IMR-90 (cell line): ENCODE measurements at regions of chr18 and their contacts with region 1.

Region 1: GRCh38 chr18:12376718-12377555 is at the start of gene AFG3L2:
- DNase-seq: peak; percentile 98
- ATAC-seq: peak; percentile 91
- H3K4me3 ChIP-seq: peak within 1 kb of the TSS; percentile 73
- H3K27ac ChIP-seq: peak within 1 kb of the TSS; percentile 76
- H3K4me1 ChIP-seq: peaks cover 2% of the 10 kb centered on the region
- H3K27me3 ChIP-seq: no peaks in the 10 kb centered on the region
- CTCF ChIP-seq: no peak
- POLR2A ChIP-seq: peak; percentile 94
- RAD21 ChIP-seq: 0 out of 2 replicates have a peak, but pooled peaks have one; percentile 3
- total RNA-seq, gene AFG3L2: 37.6 and 65.5 TPM in 2 replicates

Region 2: DNA sequence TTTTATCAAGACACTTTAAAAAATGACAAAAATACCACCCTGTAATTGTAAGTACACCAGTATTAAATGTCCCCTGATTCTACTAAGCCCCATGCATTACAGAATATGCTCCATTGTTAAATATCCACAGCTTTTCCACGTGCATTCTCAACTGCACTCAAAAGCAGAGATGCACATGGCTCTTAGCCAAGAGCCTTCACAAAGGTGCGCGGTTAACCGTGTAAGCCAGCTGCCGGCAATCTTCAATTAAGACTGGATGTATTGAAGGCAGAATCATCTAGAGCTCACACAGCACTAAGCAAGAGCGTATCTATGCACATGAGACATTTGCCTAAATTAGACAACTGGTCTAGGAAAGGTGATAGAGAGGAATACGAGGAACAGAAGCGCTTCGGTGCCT is 1572.8 kb before region 1 on chr18:
- CTCF ChIA-PET with region 1: no interaction called
- POLR2A ChIA-PET with region 1: no interaction called
- dilution Hi-C with region 1: no loop called
- in situ Hi-C with region 1: no loop called
- intact Hi-C with region 1: no loop called
- DNase-seq: no peak
- ATAC-seq: no peak
- H3K4me3 ChIP-seq: no peak overlapping the region
- H3K27ac ChIP-seq: no peak overlapping the region
- H3K4me1 ChIP-seq: peaks cover 1% of the 10 kb centered on the region; the same call in 1 of the 2 replicates
- H3K27me3 ChIP-seq: no peaks in the 10 kb centered on the region
- CTCF ChIP-seq: no peak
- POLR2A ChIP-seq: no peak
- RAD21 ChIP-seq: no peak

Region 3: DNA sequence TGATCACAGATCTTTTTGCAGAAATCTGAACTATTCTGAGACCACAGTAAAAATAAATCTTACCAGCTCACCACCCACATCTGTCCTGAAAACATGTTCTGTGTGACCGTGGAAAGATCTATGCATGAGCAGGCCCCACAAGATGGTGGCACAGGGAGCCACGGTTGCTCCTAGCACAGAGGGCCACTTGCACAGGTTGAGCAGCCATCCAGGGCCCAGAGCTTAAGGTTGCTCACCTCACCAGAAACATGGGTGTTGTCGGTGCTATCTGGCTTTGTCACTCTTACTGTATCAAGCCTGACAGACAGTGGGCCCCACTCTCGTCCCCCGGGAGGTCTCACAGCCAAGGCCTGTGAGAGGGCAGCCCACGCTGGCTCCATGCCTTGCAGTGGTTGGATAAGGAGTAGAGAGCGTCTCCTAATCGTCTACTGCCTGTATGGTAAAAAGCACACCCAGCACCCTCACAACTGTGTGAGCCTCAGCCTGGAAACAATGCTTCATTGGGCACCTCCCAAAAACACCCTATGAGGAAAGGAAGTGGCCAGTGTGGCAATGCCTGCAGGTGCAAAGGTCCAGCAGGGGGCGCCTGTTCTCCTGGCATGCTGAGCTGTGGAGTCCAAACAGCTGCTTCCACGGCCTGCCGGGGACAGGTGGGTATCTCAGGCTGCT is 49.3 kb before region 1 on chr18:
- CTCF ChIA-PET with region 1: no interaction called
- POLR2A ChIA-PET with region 1: no interaction called
- dilution Hi-C with region 1: no loop called
- in situ Hi-C with region 1: no loop called
- intact Hi-C with region 1: loop called (anchors 2 kb)
- DNase-seq: peak; percentile 69
- ATAC-seq: peak; percentile 68
- H3K4me3 ChIP-seq: no peak overlapping the region
- H3K27ac ChIP-seq: no peak overlapping the region
- H3K4me1 ChIP-seq: no peaks in the 10 kb centered on the region
- H3K27me3 ChIP-seq: no peaks in the 10 kb centered on the region
- CTCF ChIP-seq: peak; percentile 77
- POLR2A ChIP-seq: peak; percentile 61
- RAD21 ChIP-seq: peak; percentile 47

Region 4: GRCh38 chr18:12433829-12434548 is 57.1 kb after region 1 on chr18:
- CTCF ChIA-PET with region 1: no interaction called
- POLR2A ChIA-PET with region 1: no interaction called
- dilution Hi-C with region 1: no loop called
- in situ Hi-C with region 1: loop called (anchors 10 kb)
- intact Hi-C with region 1: no loop called
- DNase-seq: no peak
- ATAC-seq: no peak
- H3K4me3 ChIP-seq: no peak overlapping the region
- H3K27ac ChIP-seq: no peak overlapping the region
- H3K4me1 ChIP-seq: no peaks in the 10 kb centered on the region
- H3K27me3 ChIP-seq: no peaks in the 10 kb centered on the region
- CTCF ChIP-seq: no peak
- POLR2A ChIP-seq: no peak
- RAD21 ChIP-seq: no peak

Region 5: DNA sequence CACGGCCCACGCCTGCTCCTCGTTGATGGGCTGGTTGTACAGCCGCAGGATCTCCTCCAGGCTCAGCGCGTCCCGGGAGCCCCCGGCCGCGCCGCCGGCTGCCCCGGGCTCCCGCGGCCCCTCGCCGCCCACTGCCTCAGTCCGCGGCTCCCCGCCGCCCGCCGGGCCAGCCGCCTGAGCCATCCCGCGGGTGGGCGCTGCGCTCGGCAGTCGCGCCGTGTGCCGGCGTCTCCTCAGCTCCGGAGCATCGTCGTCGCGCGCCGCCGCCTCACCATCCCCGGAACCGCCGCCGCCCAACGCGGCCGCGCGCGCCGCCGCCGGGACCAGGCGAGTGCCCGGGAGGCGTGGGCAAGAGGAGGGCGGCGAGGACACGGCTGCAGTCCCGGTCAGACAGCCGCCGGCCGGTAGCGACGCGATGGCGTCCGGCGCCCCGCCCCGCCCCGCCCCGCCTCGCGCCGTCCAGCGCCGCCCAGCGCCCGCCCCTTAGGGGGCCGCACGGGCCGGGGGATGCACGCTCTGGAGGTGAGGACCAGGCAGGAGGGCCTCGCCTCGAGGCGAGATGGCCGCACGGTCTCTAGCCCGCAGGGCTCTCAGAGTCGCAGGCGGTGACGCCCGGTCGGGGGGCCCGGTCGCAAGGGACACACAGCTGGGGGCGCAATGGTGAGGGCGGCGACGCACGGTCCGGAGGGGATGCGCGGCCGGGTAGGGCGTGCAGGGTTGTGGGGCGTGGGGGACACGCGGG is 280.9 kb after region 1 on chr18 and contains the start of gene SPIRE1:
- CTCF ChIA-PET with region 1: no interaction called
- POLR2A ChIA-PET with region 1: no interaction called
- dilution Hi-C with region 1: no loop called
- in situ Hi-C with region 1: no loop called
- intact Hi-C with region 1: loop called (anchors 5 kb)
- DNase-seq: peak; percentile 52
- ATAC-seq: peak; percentile 90
- H3K4me3 ChIP-seq: peak within 1 kb of the TSS; percentile 91
- H3K27ac ChIP-seq: peak within 1 kb of the TSS; percentile 69
- H3K4me1 ChIP-seq: peaks cover 3% of the 10 kb centered on the region
- H3K27me3 ChIP-seq: no peaks in the 10 kb centered on the region
- CTCF ChIP-seq: peak; percentile 12; the same call in 1 of the 2 replicates
- POLR2A ChIP-seq: no peak; the same call in none of the 2 replicates
- RAD21 ChIP-seq: no peak; the same call in 1 of the 2 replicates
- total RNA-seq, gene SPIRE1: 28.3 and 31.4 TPM in 2 replicates

Region 6: GRCh38 chr18:12947355-12948041 is 570.6 kb after region 1 on chr18 and contains the start of gene SEH1L:
- CTCF ChIA-PET with region 1: no interaction called
- POLR2A ChIA-PET with region 1: no interaction called
- dilution Hi-C with region 1: no loop called
- in situ Hi-C with region 1: loop called (anchors 10 kb)
- intact Hi-C with region 1: loop called (anchors 5 kb)
- DNase-seq: peak; percentile 98
- ATAC-seq: peak; percentile 93
- H3K4me3 ChIP-seq: peak within 1 kb of the TSS; percentile 88
- H3K27ac ChIP-seq: peak within 1 kb of the TSS; percentile 93
- H3K4me1 ChIP-seq: peaks cover 3% of the 10 kb centered on the region; the same call in 1 of the 2 replicates
- H3K27me3 ChIP-seq: no peaks in the 10 kb centered on the region
- CTCF ChIP-seq: no peak
- POLR2A ChIP-seq: peak; percentile 34; the same call in 1 of the 2 replicates
- RAD21 ChIP-seq: no peak
- total RNA-seq, gene SEH1L: 43.0 and 45.5 TPM in 2 replicates